ENCODE measurements at regions of chr1 and their contacts with region 1.

Region 1: GRCh38 chr1:85307987-85308832 is 31.8 kb upstream of the BCL10 start:
- DNase-seq: peak; percentile 88 to 93
- H3K4me3 ChIP-seq: no peak overlapping the region
- H3K27ac ChIP-seq: peak overlapping the region in 1 of 2 donors; percentile 18
- H3K4me1 ChIP-seq: peaks cover 0 to 17% (median 5%) of the 10 kb centered on the region in 4 donors
- H3K27me3 ChIP-seq: no peaks in the 10 kb centered on the region
- CTCF ChIP-seq: peak; percentile 97 to 99

Region 2: DNA sequence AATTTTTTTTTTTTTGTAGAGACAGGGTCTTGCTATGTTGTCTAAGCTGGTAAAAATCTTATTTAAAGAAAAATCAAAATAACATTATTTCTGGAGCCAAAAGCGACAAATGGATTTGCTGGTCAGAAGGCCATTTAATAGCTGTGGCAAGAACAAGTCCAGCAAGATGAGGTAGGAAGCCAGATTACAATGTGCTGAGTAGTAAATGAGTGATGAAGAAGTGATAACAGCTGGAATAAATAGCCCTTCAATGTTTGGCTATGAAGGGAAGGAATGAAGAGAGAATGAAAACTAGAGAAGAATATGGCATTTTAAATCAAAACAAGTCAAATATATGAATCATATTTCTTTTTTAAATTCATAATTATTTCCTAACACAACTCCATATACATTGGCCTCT is 141.9 kb before region 1 on chr1:
- intact Hi-C with region 1: no loop called
- DNase-seq: no peak
- H3K4me3 ChIP-seq: no peak overlapping the region
- H3K27ac ChIP-seq: no peak overlapping the region
- H3K4me1 ChIP-seq: no peaks in the 10 kb centered on the region
- H3K27me3 ChIP-seq: no peaks in the 10 kb centered on the region
- CTCF ChIP-seq: no peak

Region 3: GRCh38 chr1:85502625-85503083 is 194.4 kb after region 1 on chr1:
- intact Hi-C with region 1: loop called (anchors 10 kb)
- DNase-seq: peak in 1 of 2 donors; percentile 47
- H3K4me3 ChIP-seq: no peak overlapping the region
- H3K27ac ChIP-seq: no peak overlapping the region
- H3K4me1 ChIP-seq: peaks cover 0 to 4% (median 0%) of the 10 kb centered on the region in 4 donors
- H3K27me3 ChIP-seq: no peaks in the 10 kb centered on the region
- CTCF ChIP-seq: peak; percentile 36 to 37

Region 4: GRCh38 chr1:85580872-85581801 is 272.9 kb after region 1 on chr1:
- intact Hi-C with region 1: loop called (anchors 2 kb)
- DNase-seq: peak; percentile 54 to 90
- H3K4me3 ChIP-seq: peak overlapping the region; percentile 85 to 91
- H3K27ac ChIP-seq: peak overlapping the region; percentile 99
- H3K4me1 ChIP-seq: peaks cover 0 to 46% (median 16%) of the 10 kb centered on the region in 4 donors
- H3K27me3 ChIP-seq: no peaks in the 10 kb centered on the region
- CTCF ChIP-seq: peak; percentile 76 to 77

Region 5: GRCh38 chr1:85692730-85693314 is 384.6 kb after region 1 on chr1:
- intact Hi-C with region 1: loop called (anchors 2 kb)
- DNase-seq: no peak
- H3K4me3 ChIP-seq: no peak overlapping the region
- H3K27ac ChIP-seq: peak overlapping the region in 1 of 2 donors; percentile 6
- H3K4me1 ChIP-seq: peaks cover 0 to 3% (median 0%) of the 10 kb centered on the region in 4 donors
- H3K27me3 ChIP-seq: no peaks in the 10 kb centered on the region
- CTCF ChIP-seq: peak; percentile 47 to 61

Region 6: GRCh38 chr1:85707990-85708828 is 400.0 kb after region 1 on chr1 and contains the start of gene ZNHIT6:
- intact Hi-C with region 1: loop called (anchors 5 kb)
- DNase-seq: peak; percentile 84 to 94
- H3K4me3 ChIP-seq: peak within 1 kb of the TSS; percentile 64 to 65
- H3K27ac ChIP-seq: peak within 1 kb of the TSS; percentile 85 to 88
- H3K4me1 ChIP-seq: peaks cover 0 to 25% (median 8%) of the 10 kb centered on the region in 4 donors
- H3K27me3 ChIP-seq: no peaks in the 10 kb centered on the region
- CTCF ChIP-seq: peak; percentile 19 to 33

Region 7: DNA sequence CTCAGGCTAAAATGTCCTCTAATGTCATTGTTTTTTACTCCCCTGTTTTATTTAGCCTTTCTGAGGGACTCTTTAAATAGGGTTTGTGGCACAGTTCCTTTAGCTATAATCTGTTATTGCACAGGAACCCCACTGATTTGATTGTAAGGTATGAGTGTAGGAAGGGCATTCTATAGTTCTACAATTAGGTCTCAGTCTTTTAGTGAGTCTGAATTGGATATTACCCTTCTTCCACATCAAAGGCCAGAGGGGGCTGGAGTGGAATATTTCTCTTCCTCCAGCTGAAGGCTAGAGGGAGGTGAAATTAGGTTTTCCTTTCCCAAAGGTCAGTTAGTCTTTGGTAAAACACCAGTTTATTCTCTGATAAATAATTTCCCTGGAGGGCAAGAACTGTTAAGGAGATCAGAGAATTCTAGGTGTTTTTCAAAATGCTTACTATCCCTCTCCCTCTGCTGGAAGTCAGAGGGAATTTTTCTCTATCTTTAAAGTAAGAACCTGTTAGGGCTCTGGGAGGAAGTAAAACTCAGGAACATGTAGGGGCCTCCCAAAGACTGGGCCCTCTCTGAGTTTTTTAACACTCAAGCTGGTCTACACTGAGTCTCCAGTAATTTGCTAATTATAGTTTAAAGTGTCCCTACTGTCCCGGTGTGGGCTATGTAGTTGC is 576.3 kb after region 1 on chr1:
- intact Hi-C with region 1: no loop called
- DNase-seq: no peak
- H3K4me3 ChIP-seq: no peak overlapping the region
- H3K27ac ChIP-seq: no peak overlapping the region
- H3K4me1 ChIP-seq: no peaks in the 10 kb centered on the region
- H3K27me3 ChIP-seq: no peaks in the 10 kb centered on the region
- CTCF ChIP-seq: peak; percentile 18 to 24